SK-N-SH (cell line): ENCODE measurements at regions of chr4 and their contacts with region 1.

Region 1: DNA sequence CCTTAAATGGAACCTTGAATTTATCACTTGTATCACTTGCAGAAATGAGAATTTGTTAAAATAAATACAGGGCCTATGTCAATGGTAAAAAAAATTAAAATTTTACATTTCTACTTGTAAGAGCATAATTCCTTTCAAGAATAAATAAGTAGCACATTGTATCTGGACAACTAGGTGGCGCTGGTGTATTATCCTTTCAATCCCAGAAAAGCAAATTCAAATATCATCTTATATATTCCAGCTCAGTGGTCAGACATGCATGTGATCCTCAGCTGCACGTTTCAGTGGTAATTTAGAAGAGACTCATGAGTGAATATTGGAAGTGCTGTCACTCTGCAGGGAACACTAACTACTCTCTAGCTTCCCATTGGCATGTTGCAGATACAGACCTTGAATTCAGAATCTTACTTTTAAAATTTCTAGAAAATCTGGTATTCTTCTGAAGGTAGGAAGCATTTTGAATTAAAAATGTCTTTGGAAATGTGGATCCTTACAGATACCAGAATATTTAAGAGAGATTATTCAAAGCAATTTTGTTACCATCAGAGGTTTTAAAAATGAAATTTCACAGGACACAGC is 1414.7 kb upstream of the TENM3 start:
- DNase-seq: peak; percentile 51
- H3K4me3 ChIP-seq: no peak overlapping the region
- H3K27ac ChIP-seq: no peak overlapping the region
- H3K4me1 ChIP-seq: peaks cover 0 to 8% of the 10 kb centered on the region in 2 experiments; a peak in 1 of 4 replicates
- H3K27me3 ChIP-seq: no peaks in the 10 kb centered on the region
- CTCF ChIP-seq: peak; percentile 82
- EP300 ChIP-seq: no peak
- RAD21 ChIP-seq: peak; percentile 93

Region 2: GRCh38 chr4:180947425-180947824 is 118.9 kb after region 1 on chr4:
- CTCF ChIA-PET with region 1: interaction called, 12 read pairs
- POLR2A ChIA-PET with region 1: no interaction called
- DNase-seq: peak; percentile 42
- H3K4me3 ChIP-seq: no peak overlapping the region
- H3K27ac ChIP-seq: no peak overlapping the region
- H3K4me1 ChIP-seq: no peaks in the 10 kb centered on the region
- H3K27me3 ChIP-seq: no peaks in the 10 kb centered on the region
- CTCF ChIP-seq: peak; percentile 41
- EP300 ChIP-seq: no peak
- RAD21 ChIP-seq: peak; percentile 61

Region 3: DNA sequence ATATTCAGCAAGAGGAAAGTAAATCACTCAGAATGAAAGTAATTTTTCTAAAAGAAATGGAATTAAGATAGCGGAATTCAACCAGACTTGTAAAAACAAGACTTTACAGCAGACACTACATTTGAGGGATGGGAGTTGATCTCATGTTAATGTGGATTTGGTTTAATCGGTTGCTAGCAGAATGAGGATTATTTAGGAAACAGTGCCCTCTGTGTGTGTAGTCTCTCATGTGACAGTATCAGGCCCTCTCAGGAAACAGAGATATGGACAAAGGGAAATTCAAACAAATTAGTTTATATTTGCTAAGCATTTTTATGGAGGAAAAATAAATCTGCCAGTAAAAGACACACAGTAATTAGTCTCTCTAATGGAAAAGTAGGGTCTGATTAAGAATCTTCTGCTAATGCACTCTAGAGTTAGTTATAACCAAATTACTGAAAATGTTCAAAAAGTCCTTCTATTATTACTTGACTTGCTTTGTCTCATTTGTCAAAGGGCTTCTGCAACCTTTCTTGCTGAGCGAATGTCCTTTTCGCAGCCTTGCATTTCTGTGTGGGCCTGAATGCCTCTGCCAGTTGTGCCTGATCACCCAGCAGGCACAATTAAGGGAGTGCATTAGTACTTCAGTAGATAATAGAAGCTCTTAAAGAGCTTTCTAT is 132.3 kb after region 1 on chr4:
- CTCF ChIA-PET with region 1: interaction called, 47 read pairs
- POLR2A ChIA-PET with region 1: interaction called, 3 read pairs
- DNase-seq: peak; percentile 34
- H3K4me3 ChIP-seq: no peak overlapping the region
- H3K27ac ChIP-seq: peak overlapping the region in 1 of 2 experiments; percentile 96; a peak in 2 of 4 replicates
- H3K4me1 ChIP-seq: peaks cover 0 to 11% of the 10 kb centered on the region in 2 experiments; a peak in 2 of 4 replicates
- H3K27me3 ChIP-seq: no peaks in the 10 kb centered on the region
- CTCF ChIP-seq: peak; percentile 29
- EP300 ChIP-seq: peak in 1 of 2 experiments; percentile 79; a peak in 1 of 4 replicates
- RAD21 ChIP-seq: peak; percentile 85